ENCODE measurements at regions of chr16 and their contacts with region 1.

Region 1: GRCh38 chr16:9134739-9135138 is 43.3 kb downstream of the HAPSTR1 start:
- DNase-seq: peak; percentile 27 to 37
- ATAC-seq: peak; percentile 44 to 78 (median 64)
- H3K4me3 ChIP-seq: no peak overlapping the region
- H3K27ac ChIP-seq: no peak overlapping the region
- H3K4me1 ChIP-seq: peaks cover 0 to 17% (median 6%) of the 10 kb centered on the region in 9 donors
- H3K27me3 ChIP-seq: no peaks in the 10 kb centered on the region
- CTCF ChIP-seq: peak; percentile 9 to 66 (median 57)

Region 2: GRCh38 chr16:8919934-8920462 is 214.7 kb before region 1 on chr16:
- intact Hi-C with region 1: loop called in 1 of 10 experiments (anchors 10 kb)
- DNase-seq: no peak
- ATAC-seq: no peak
- H3K4me3 ChIP-seq: no peak overlapping the region
- H3K27ac ChIP-seq: no peak overlapping the region
- H3K4me1 ChIP-seq: peaks cover 6 to 18% (median 12%) of the 10 kb centered on the region in 9 donors
- H3K27me3 ChIP-seq: no peaks in the 10 kb centered on the region
- CTCF ChIP-seq: no peak

Measured in heart right ventricle (tissue), 16 donors.